HAP-1 (cell line): ENCODE measurements at regions of chr19 and their contacts with region 1.

Region 1: GRCh38 chr19:17873786-17874757 is 2.3 kb downstream of the SLC5A5 start:
- DNase-seq: peak; percentile 62 to 91
- H3K4me3 ChIP-seq: peak overlapping the region; percentile 22
- H3K4me1 ChIP-seq: peaks cover 8% of the 10 kb centered on the region
- H3K27me3 ChIP-seq: no peaks in the 10 kb centered on the region

Region 2: GRCh38 chr19:17929056-17929455 is 55.0 kb after region 1 on chr19:
- in situ Hi-C with region 1: loop called (anchors 10 kb)
- DNase-seq: no peak
- H3K4me3 ChIP-seq: no peak overlapping the region
- H3K4me1 ChIP-seq: peaks cover 14% of the 10 kb centered on the region
- H3K27me3 ChIP-seq: no peaks in the 10 kb centered on the region